ENCODE measurements at regions of chr15 and their contacts with region 1.

Region 1: DNA sequence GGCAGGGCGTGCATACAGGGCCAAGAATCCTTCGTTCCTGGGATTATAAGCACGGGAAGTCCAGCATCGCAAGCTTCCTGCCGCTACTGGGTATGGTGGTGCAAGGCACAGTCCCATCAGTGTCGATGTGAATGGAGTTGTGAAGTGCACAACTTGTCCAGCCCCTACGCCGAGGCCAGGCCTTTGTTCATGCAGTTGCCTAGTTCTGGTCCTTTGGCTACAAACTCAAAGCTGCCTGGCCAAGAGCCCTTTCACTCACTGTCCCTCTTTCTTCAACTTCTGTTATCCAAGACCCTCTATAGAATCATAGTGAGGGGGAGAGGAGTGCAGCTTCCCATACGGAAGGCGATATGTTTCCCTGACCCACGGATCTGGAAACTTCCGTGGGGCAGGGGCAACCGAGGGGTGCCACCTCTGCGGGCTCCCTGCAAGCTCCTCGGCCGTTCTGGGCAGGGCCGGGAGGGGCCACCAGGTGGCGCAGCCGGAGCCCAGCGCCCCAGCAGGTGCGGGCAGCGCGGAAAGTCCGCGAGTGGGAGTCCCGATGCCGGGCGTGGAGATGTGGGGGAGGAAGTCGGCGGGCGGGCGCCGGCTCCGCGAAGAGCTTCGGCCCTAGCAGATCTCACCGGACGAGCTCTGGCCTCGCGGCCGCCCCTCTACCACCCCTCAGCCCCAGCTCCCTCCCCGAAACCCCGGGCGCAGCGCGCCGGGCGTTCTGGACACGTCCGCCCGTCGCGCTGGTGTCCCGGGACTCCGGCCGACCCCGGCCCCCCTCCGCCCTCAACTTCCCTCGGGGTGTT is 693 bp downstream of the RASGRP1 start:
- DNase-seq: peak; percentile 75 to 93 (median 87)
- ATAC-seq: peak; percentile 63
- H3K4me3 ChIP-seq: peak overlapping the region; percentile 95
- H3K4me3 Mint-ChIP-seq: peak overlapping the region; percentile 98
- H3K27ac ChIP-seq: peak overlapping the region; percentile 57 to 93
- H3K27ac Mint-ChIP-seq: peak overlapping the region; percentile 93
- H3K4me1 ChIP-seq: peaks cover 54% of the 10 kb centered on the region
- H3K4me1 Mint-ChIP-seq: peaks cover 77% of the 10 kb centered on the region
- H3K27me3 ChIP-seq: no peaks in the 10 kb centered on the region
- H3K27me3 Mint-ChIP-seq: no peaks in the 10 kb centered on the region
- CTCF ChIP-seq: peak; percentile 90

Region 2: GRCh38 chr15:38389924-38390542 is 173.9 kb before region 1 on chr15:
- CTCF ChIA-PET with region 1: no interaction called
- POLR2A ChIA-PET with region 1: no interaction called
- intact Hi-C with region 1: no loop called
- DNase-seq: peak; percentile 31 to 65 (median 44)
- ATAC-seq: peak; percentile 54
- H3K4me3 ChIP-seq: no peak overlapping the region
- H3K4me3 Mint-ChIP-seq: no peak overlapping the region
- H3K27ac ChIP-seq: no peak overlapping the region
- H3K27ac Mint-ChIP-seq: no peak overlapping the region
- H3K4me1 ChIP-seq: no peaks in the 10 kb centered on the region
- H3K4me1 Mint-ChIP-seq: no peaks in the 10 kb centered on the region
- H3K27me3 ChIP-seq: peaks cover 0 to 12% of the 10 kb centered on the region in 2 experiments
- H3K27me3 Mint-ChIP-seq: peaks cover 26% of the 10 kb centered on the region
- CTCF ChIP-seq: peak; percentile 82

Region 3: GRCh38 chr15:38474155-38474757 is 89.7 kb before region 1 on chr15:
- CTCF ChIA-PET with region 1: interaction called, 18 read pairs
- POLR2A ChIA-PET with region 1: interaction called, 3 read pairs
- intact Hi-C with region 1: loop called (anchors 2 to 5 kb)
- DNase-seq: peak in 10 of 14 experiments; percentile 6 to 85 (median 30)
- ATAC-seq: peak; percentile 100
- H3K4me3 ChIP-seq: no peak overlapping the region
- H3K4me3 Mint-ChIP-seq: no peak overlapping the region
- H3K27ac ChIP-seq: no peak overlapping the region
- H3K27ac Mint-ChIP-seq: peak overlapping the region; percentile 61
- H3K4me1 ChIP-seq: no peaks in the 10 kb centered on the region
- H3K4me1 Mint-ChIP-seq: peaks cover 5% of the 10 kb centered on the region
- H3K27me3 ChIP-seq: no peaks in the 10 kb centered on the region
- H3K27me3 Mint-ChIP-seq: no peaks in the 10 kb centered on the region
- CTCF ChIP-seq: peak; percentile 82

Region 4: DNA sequence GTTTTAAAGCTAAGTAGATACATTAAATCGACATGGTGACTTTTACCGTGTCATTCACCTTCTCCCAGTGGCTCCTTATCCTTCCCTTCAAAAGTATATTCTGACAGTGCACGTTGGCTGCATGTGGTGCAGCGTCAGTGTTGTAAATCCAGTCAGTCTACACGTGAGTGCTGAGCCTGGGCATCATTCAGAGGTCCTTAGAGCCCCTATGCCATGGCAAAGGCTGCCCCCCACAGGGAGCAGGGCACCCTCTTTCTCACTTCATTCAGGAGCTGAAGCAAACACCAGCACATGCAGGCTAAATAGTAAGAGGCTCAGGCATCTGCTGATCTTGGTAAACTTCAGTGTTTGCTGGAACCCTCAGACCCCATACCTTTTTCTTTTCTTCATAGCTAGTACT is 42.6 kb before region 1 on chr15:
- CTCF ChIA-PET with region 1: interaction called, 14 read pairs
- POLR2A ChIA-PET with region 1: interaction called, 3 read pairs
- intact Hi-C with region 1: loop called (anchors 5 kb)
- DNase-seq: no peak
- ATAC-seq: no peak
- H3K4me3 ChIP-seq: no peak overlapping the region
- H3K4me3 Mint-ChIP-seq: no peak overlapping the region
- H3K27ac ChIP-seq: no peak overlapping the region
- H3K27ac Mint-ChIP-seq: peak overlapping the region; percentile 69
- H3K4me1 ChIP-seq: peaks cover 7% of the 10 kb centered on the region
- H3K4me1 Mint-ChIP-seq: peaks cover 49% of the 10 kb centered on the region
- H3K27me3 ChIP-seq: no peaks in the 10 kb centered on the region
- H3K27me3 Mint-ChIP-seq: no peaks in the 10 kb centered on the region
- CTCF ChIP-seq: no peak

Region 5: GRCh38 chr15:38547255-38547997 is 16.5 kb before region 1 on chr15:
- CTCF ChIA-PET with region 1: interaction called, 28 read pairs
- POLR2A ChIA-PET with region 1: interaction called, 11 read pairs
- intact Hi-C with region 1: no loop called
- DNase-seq: peak in 3 of 14 experiments; percentile 32 to 55 (median 43)
- ATAC-seq: peak; percentile 27
- H3K4me3 ChIP-seq: no peak overlapping the region
- H3K4me3 Mint-ChIP-seq: peak overlapping the region; percentile 66
- H3K27ac ChIP-seq: no peak overlapping the region
- H3K27ac Mint-ChIP-seq: peak overlapping the region; percentile 80
- H3K4me1 ChIP-seq: peaks cover 38% of the 10 kb centered on the region
- H3K4me1 Mint-ChIP-seq: peaks cover 91% of the 10 kb centered on the region
- H3K27me3 ChIP-seq: no peaks in the 10 kb centered on the region
- H3K27me3 Mint-ChIP-seq: no peaks in the 10 kb centered on the region
- CTCF ChIP-seq: no peak

Region 6: GRCh38 chr15:38647683-38648082 is 83.8 kb after region 1 on chr15:
- CTCF ChIA-PET with region 1: interaction called, 60 read pairs
- POLR2A ChIA-PET with region 1: interaction called, 277 read pairs
- intact Hi-C with region 1: loop called in 1 of 2 experiments (anchors 1 kb)
- DNase-seq: no peak
- ATAC-seq: no peak
- H3K4me3 ChIP-seq: no peak overlapping the region
- H3K4me3 Mint-ChIP-seq: peak overlapping the region; percentile 4
- H3K27ac ChIP-seq: peak overlapping the region in 1 of 2 donors; percentile 20
- H3K27ac Mint-ChIP-seq: peak overlapping the region; percentile 93
- H3K4me1 ChIP-seq: peaks cover 62% of the 10 kb centered on the region
- H3K4me1 Mint-ChIP-seq: peaks cover 81% of the 10 kb centered on the region
- H3K27me3 ChIP-seq: no peaks in the 10 kb centered on the region
- H3K27me3 Mint-ChIP-seq: no peaks in the 10 kb centered on the region
- CTCF ChIP-seq: no peak

Region 7: GRCh38 chr15:38683382-38684242 is 119.7 kb after region 1 on chr15:
- CTCF ChIA-PET with region 1: interaction called, 247 read pairs
- POLR2A ChIA-PET with region 1: interaction called, 178 read pairs
- intact Hi-C with region 1: loop called (anchors 1 kb)
- DNase-seq: peak; percentile 45 to 88 (median 70)
- ATAC-seq: peak; percentile 63
- H3K4me3 ChIP-seq: no peak overlapping the region
- H3K4me3 Mint-ChIP-seq: peak overlapping the region; percentile 2
- H3K27ac ChIP-seq: peak overlapping the region in 1 of 2 donors; percentile 39
- H3K27ac Mint-ChIP-seq: peak overlapping the region; percentile 89
- H3K4me1 ChIP-seq: peaks cover 60% of the 10 kb centered on the region
- H3K4me1 Mint-ChIP-seq: peaks cover 84% of the 10 kb centered on the region
- H3K27me3 ChIP-seq: no peaks in the 10 kb centered on the region
- H3K27me3 Mint-ChIP-seq: no peaks in the 10 kb centered on the region
- CTCF ChIP-seq: peak; percentile 96

Measured in CD4-positive, alpha-beta T cell (primary cell).